AG04449 (cell line): ENCODE measurements at regions of chr14 and their contacts with region 1.

Region 1: GRCh38 chr14:69129264-69129880 is 23.5 kb downstream of the DCAF5 start:
- DNase-seq: peak; percentile 55
- H3K4me3 ChIP-seq: no peak overlapping the region
- CTCF ChIP-seq: peak; percentile 83

Region 2: GRCh38 chr14:69117020-69117767 is 12.2 kb before region 1 on chr14:
- CTCF ChIA-PET with region 1: interaction called, 85 read pairs
- POLR2A ChIA-PET with region 1: no interaction called
- DNase-seq: no peak
- H3K4me3 ChIP-seq: no peak overlapping the region
- CTCF ChIP-seq: no peak

Region 3: GRCh38 chr14:69153131-69153872 is 23.9 kb after region 1 on chr14:
- CTCF ChIA-PET with region 1: interaction called, 34 read pairs
- POLR2A ChIA-PET with region 1: interaction called, 4 read pairs
- DNase-seq: peak; percentile 47
- H3K4me3 ChIP-seq: peak overlapping the region; percentile 84
- CTCF ChIP-seq: no peak

Region 4: DNA sequence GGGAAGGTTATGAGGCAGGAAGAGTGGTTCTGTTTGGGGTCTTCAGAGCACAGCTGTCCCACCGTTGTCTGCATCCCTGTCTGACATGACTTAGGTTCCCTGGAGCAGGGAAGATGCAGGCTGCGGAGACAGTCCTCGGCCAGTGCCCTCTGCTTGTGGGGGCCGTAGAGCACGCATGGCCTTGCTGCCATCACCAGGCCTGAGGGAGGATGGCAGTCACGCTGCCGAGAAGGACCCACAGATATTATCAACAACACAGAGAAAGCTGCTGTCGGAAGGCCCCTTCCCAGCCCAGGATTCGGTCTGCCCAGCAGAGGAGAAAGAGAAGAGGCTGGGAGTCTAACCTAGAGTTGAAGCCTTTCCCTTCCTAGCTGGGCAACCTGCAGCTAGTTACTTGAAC is 233.7 kb after region 1 on chr14:
- CTCF ChIA-PET with region 1: interaction called, 11 read pairs
- POLR2A ChIA-PET with region 1: no interaction called
- DNase-seq: no peak
- H3K4me3 ChIP-seq: no peak overlapping the region
- CTCF ChIP-seq: peak; percentile 84

Region 5: GRCh38 chr14:69460093-69460701 is 330.8 kb after region 1 on chr14:
- CTCF ChIA-PET with region 1: interaction called, 17 read pairs
- POLR2A ChIA-PET with region 1: no interaction called
- DNase-seq: peak; percentile 44
- H3K4me3 ChIP-seq: no peak overlapping the region
- CTCF ChIP-seq: peak; percentile 71